ENCODE measurements at regions of chr1 and their contacts with region 1.

Region 1: DNA sequence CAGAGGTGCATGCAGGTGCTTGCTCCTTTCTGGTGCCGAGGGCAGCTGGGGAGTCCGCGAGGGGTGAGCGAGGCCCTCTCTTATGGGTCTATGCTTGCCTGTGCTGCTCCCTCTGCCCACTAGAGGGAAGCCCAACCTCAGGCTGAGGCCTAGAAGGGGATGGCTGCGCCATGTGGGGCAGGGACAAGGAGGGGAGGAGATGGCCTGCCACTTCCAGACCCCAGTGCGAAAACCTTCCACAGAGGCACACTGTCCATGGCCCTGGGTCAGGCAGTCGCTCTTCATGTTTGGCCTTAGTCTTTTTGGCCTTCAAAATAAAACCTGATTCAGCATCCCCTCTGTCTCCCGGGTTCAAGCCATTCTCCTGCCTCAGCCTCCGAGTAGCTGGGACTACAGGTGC is 14.0 kb downstream of the RHBG start:
- DNase-seq: peak; percentile 89
- CTCF ChIP-seq: peak; percentile 97

Region 2: DNA sequence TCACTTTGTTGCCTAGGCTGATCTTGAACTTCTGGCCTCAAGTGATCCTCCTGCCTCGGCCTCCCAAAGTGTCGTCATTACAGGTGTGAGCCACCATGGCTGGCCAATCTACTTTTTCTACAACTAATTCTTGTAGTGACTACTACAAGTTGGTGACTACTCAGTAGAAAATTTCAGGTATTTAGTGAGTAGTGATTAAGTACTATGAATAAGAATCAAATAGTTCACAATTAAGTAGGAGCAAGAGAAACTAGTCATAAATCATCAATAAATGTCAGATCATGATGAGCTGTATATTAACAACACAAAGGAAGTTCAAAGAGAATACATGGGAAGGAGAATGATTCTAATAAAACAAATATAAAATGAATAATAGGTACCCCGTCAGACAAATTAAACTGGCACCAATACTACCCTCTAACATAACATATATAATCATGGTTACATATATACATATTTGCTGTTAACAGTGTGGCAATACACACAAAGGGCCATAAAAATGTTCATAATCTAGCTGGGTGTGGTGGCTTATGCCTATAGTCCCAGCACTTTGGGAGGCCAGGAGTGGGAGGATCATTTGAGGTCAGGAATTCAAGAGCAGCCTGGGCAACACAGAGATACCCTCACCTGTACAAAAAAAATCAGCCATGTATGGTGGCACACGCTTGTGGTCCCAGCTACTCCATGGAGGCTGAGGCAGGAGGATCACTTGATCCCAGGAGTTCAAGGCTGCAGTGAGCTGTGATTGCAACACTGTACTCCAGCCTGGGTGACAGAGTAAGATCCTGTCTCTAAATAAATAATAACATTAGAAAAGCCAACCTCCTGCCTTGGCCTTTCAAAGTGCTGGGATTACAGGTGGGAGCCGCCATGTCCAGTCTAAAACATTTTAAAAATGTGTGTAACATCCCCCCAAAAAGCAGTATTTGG is 713.5 kb before region 1 on chr1:
- in situ Hi-C with region 1: no loop called
- DNase-seq: no peak
- CTCF ChIP-seq: no peak

Region 3: DNA sequence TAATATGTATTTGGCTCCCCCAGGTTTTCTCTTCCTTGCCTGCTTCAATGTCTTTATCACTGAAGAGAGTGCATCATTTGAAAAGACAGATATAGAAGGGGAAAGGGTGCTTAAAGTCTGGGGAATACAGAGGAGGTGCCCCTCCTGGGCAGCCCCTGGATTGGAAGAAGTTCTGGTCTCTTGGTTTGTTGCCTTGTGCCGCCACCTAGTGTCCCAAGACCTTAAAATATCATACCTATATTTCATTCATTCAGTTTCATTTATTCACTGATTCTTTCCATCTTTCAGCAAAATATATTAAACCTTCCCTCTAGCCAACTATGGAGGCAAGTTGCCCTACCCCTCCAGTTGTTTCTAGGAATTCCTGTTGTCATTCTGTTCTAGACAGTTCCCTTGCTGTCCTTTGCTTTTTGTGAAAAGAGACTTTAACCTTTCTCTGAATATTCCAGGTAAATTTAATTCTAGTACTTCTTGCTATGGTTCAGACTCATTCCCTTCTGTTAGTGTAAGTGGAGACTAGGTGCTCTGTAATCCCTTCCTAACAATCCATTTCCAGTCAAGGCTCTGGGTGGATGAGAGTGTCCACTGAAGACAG is 61.5 kb after region 1 on chr1:
- in situ Hi-C with region 1: loop called (anchors 5 kb)
- DNase-seq: peak; percentile 48
- CTCF ChIP-seq: peak; percentile 47

Region 4: GRCh38 chr1:156618853-156619581 is 236.0 kb after region 1 on chr1 and contains the start of gene HAPLN2:
- in situ Hi-C with region 1: loop called (anchors 10 kb)
- DNase-seq: no peak
- CTCF ChIP-seq: peak; percentile 65

Measured in GM13977 (cell line).